GM23248 (cell line): ENCODE measurements at regions of chr5 and their contacts with region 1.

Region 1: DNA sequence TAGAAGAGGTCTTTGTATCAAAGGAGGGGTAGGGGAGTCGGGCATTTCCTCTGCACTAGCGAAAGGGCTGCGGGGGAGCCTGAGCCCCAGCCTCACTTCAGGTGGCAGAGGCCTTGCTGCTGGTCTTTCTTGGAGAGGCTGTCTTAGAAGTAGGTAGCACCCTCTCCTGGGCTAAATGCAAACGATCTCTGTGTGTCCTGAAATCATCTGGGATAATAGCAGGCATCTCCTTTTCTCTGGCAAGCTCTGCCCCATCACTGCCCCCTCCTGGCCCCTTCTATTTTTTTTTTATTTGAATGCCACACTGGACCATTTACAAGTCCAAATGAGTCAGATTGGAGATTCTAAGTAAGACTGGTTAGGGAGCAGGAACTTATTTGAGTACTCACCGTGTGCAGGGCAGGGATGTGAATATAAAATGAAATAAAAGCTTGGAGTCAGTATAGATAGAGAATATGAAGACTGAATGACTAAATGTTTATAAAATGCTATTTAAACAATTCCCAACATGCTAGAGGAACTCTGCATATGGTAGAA is 137.1 kb downstream of the FGF1 start:
- DNase-seq: peak; percentile 94
- H3K4me3 ChIP-seq: no peak overlapping the region
- H3K27ac ChIP-seq: no peak overlapping the region
- H3K4me1 ChIP-seq: peaks cover 28% of the 10 kb centered on the region
- H3K27me3 ChIP-seq: no peaks in the 10 kb centered on the region

Region 2: GRCh38 chr5:142024771-142025304 is 524.0 kb before region 1 on chr5:
- in situ Hi-C with region 1: loop called (anchors 25 kb)
- DNase-seq: peak; percentile 94
- H3K4me3 ChIP-seq: peak overlapping the region; percentile 73
- H3K27ac ChIP-seq: peak overlapping the region; percentile 79
- H3K4me1 ChIP-seq: peaks cover 5% of the 10 kb centered on the region; the same call in 1 of the 2 replicates
- H3K27me3 ChIP-seq: no peaks in the 10 kb centered on the region

Region 3: DNA sequence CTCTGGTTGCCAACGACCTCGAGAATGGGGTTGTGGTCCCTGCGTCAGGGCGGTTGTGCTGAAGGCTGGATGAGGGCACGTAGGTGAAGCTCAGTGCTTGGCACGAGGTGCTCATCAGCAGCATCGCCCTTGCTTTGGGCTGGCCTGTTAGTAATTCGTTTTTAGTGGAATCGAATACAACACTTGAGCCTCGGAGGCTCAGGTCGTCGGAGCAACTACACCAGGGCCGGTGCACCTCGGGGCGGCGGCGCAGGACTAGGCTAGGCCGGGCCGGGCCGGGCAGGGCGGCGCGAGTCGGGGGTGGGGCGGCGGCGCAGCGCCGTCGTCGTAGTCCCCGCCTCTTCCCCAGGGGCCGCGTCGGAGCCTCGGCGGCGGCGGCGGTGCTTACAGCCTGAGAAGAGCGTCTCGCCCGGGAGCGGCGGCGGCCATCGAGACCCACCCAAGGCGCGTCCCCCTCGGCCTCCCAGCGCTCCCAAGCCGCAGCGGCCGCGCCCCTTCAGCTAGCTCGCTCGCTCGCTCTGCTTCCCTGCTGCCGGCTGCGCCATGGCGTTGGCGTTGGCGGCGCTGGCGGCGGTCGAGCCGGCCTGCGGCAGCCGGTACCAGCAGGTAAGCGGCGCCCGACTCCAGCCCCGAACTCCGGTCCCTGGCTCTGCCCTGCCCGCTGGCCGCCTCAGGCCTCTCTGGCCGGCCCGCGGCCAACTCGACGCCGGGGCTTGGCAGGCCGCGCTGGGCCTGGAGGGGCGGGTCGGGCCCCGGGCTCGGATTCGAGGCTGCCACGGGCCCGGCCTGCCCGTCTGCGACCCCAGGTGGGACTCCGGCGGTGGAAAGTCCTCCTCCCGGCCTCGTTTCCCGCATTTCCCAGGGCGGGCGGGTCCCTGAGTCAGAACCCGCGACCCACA is 440.1 kb before region 1 on chr5 and contains the start of gene NDFIP1:
- in situ Hi-C with region 1: no loop called
- DNase-seq: peak; percentile 93
- H3K4me3 ChIP-seq: peak within 1 kb of the TSS; percentile 94
- H3K27ac ChIP-seq: peak within 1 kb of the TSS; percentile 91
- H3K4me1 ChIP-seq: peaks cover 18% of the 10 kb centered on the region
- H3K27me3 ChIP-seq: no peaks in the 10 kb centered on the region
- total RNA-seq, gene NDFIP1: 55.2 and 57.5 TPM in 2 replicates

Region 4: DNA sequence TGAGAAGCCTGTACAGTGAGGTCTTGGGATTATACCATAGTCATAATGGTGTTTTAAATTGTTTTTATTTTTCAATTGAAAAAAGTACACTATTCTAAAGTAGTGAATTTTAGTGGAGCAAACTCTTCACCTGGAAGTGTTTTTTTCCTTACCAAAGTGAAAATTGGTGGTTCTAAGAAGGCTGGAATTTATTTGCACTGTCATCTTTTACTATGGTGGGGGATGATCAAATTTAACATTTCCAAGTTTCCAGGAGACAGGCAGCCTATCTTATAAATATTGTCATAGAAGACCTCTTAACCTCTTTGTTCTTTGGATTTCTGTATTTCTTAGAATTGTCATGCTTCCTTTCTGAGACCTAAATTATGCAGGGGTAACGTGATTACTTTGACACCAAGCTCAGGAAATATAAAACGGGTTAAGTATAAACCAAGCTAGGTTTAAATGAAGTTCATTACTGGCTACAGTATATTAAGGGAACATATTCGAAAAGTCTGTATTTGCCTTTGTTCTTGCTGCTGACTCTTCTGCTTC is 420.1 kb before region 1 on chr5:
- in situ Hi-C with region 1: no loop called
- DNase-seq: no peak
- H3K4me3 ChIP-seq: peak overlapping the region; percentile 76
- H3K27ac ChIP-seq: peak overlapping the region; percentile 36
- H3K4me1 ChIP-seq: peaks cover 18% of the 10 kb centered on the region
- H3K27me3 ChIP-seq: no peaks in the 10 kb centered on the region

Region 5: DNA sequence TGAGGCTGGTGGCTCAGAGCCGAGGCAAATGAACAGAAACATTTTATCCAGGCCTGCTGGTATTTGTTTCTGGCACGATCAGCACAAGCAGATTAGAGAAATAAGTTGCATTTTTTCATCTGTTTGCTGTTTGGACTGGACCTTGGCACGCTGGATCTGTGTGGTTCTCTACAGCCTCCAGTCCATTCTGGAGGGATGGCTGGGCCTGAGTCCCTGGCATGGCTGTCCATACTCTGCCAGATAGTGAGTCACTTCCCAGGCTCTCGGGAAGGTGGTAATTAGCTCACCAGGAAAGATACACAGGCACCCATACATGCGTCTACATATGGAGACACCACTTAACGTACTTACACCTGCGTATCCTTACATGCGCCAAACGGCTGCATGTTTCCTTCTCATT is 302.5 kb before region 1 on chr5:
- in situ Hi-C with region 1: no loop called
- DNase-seq: peak; percentile 86
- H3K4me3 ChIP-seq: no peak overlapping the region
- H3K27ac ChIP-seq: peak overlapping the region; percentile 10; the same call in 1 of the 2 replicates
- H3K4me1 ChIP-seq: peaks cover 20% of the 10 kb centered on the region
- H3K27me3 ChIP-seq: no peaks in the 10 kb centered on the region

Region 6: GRCh38 chr5:142324871-142325724 is 223.7 kb before region 1 on chr5 and contains the start of gene SPRY4:
- in situ Hi-C with region 1: loop called (anchors 10 kb)
- DNase-seq: peak; percentile 98
- H3K4me3 ChIP-seq: peak within 1 kb of the TSS; percentile 80
- H3K27ac ChIP-seq: peak within 1 kb of the TSS; percentile 91
- H3K4me1 ChIP-seq: peaks cover 45% of the 10 kb centered on the region
- H3K27me3 ChIP-seq: no peaks in the 10 kb centered on the region
- total RNA-seq, gene SPRY4: 10.9 and 12.8 TPM in 2 replicates

Region 7: DNA sequence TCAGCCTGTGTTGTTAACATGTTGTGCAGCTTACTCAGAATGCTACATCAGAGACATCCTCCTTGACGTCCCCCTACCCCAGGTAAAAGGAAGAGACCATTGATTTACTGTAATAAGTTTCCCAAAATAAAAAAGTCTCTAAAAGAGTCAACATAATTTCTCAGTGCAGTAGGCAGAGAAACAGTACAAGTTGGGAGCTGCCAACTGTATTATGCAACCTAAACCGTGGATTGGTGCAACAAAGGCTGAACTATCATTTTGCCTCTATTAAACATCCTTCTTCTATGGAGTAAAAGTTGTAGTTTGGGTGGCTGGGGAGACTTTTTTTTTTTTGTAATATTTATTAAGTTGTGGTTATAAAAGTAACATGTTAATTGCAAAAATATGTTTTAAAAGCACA is 646.7 kb after region 1 on chr5:
- in situ Hi-C with region 1: no loop called
- DNase-seq: peak; percentile 67
- H3K4me3 ChIP-seq: no peak overlapping the region
- H3K27ac ChIP-seq: 0 out of 2 replicates have a peak overlapping the region, but pooled peaks have one; percentile 0
- H3K4me1 ChIP-seq: peaks cover 43% of the 10 kb centered on the region
- H3K27me3 ChIP-seq: no peaks in the 10 kb centered on the region